ENCODE measurements at regions of chr12 and their contacts with region 1.

Region 1: GRCh38 chr12:50314629-50315312 is 31.5 kb upstream of the LIMA1 start:
- DNase-seq: peak; percentile 46
- ATAC-seq: peak; percentile 60; the same call in 1 of the 2 replicates
- H3K4me3 ChIP-seq: no peak overlapping the region
- H3K27ac ChIP-seq: peak overlapping the region; percentile 78
- H3K4me1 ChIP-seq: peaks cover 20% of the 10 kb centered on the region
- H3K27me3 ChIP-seq: no peaks in the 10 kb centered on the region
- CTCF ChIP-seq: peak; percentile 81

Region 2: DNA sequence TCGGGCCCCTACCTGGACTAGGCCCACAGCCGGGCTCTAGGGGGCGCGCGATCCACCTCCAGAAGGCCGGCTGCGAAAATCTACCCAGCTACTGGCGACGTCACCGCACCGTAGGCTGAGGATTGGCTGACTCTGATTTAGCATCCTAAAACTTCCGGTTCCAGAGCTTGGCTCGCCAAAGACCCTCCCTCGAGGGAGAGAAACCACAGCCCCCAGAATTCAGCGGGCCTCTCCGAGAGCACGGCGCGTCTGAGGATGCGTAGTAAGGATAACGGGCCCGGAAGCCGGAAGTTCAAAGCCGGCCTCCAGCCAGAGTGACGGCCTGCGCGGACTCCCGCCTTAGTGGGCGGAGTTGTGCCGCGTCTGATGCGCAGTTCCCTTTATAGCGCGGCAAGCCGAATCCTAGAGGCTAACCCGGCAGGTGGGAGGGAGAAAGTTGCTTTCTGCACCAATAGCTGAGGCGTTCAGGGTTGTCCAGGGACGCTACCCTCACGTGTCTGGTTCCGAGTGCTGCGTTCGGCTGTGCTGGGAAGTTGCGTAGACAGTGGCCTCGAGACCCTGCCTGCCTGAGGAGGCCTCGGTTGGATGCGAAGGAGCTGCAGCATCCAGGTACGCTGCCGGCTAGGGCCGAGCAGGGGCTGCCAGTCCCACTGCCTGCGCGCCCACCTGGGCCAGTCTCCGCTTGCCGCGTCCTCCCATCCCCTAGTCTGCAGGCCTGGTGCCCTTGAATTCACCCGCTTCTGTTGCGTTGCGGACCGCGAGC is 202.9 kb before region 1 on chr12 and contains the start of gene COX14:
- CTCF ChIA-PET with region 1: interaction called, 15 read pairs
- POLR2A ChIA-PET with region 1: no interaction called
- in situ Hi-C with region 1: no loop called
- intact Hi-C with region 1: no loop called
- DNase-seq: peak; percentile 99
- ATAC-seq: peak; percentile 94
- H3K4me3 ChIP-seq: peak within 1 kb of the TSS; percentile 64 to 99
- H3K27ac ChIP-seq: peak within 1 kb of the TSS; percentile 71
- H3K4me1 ChIP-seq: peaks cover 15% of the 10 kb centered on the region
- H3K27me3 ChIP-seq: no peaks in the 10 kb centered on the region
- CTCF ChIP-seq: peak; percentile 99
- total RNA-seq, gene COX14: 74.5 TPM

Region 3: DNA sequence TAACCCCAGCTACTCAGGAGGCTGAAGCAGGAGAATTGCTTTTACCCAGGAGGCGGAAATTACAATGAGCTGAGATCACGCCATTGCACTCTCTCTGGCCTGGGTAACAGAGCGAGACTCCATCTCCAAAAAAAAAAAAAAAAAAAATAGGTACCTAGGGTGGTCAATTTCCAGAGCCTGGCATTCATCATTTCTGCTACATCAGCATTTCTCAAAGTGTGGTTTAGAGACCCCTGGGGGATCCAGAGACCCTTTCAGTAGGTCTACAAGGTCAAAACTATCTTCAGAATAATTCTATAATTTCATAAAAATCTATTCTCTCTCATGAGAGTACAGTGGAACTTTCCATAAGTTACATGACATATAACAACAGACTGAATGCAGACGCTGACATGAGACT is 167.5 kb before region 1 on chr12:
- CTCF ChIA-PET with region 1: interaction called, 15 read pairs
- POLR2A ChIA-PET with region 1: no interaction called
- in situ Hi-C with region 1: no loop called
- intact Hi-C with region 1: no loop called
- DNase-seq: no peak
- ATAC-seq: no peak
- H3K4me3 ChIP-seq: no peak overlapping the region
- H3K27ac ChIP-seq: no peak overlapping the region
- H3K4me1 ChIP-seq: peaks cover 9% of the 10 kb centered on the region; the same call in 1 of the 2 replicates
- H3K27me3 ChIP-seq: no peaks in the 10 kb centered on the region
- CTCF ChIP-seq: no peak

Region 4: GRCh38 chr12:50162230-50162629 is 152.5 kb before region 1 on chr12:
- CTCF ChIA-PET with region 1: interaction called, 12 read pairs
- POLR2A ChIA-PET with region 1: no interaction called
- in situ Hi-C with region 1: no loop called
- intact Hi-C with region 1: no loop called
- DNase-seq: no peak
- ATAC-seq: no peak
- H3K4me3 ChIP-seq: no peak overlapping the region
- H3K27ac ChIP-seq: no peak overlapping the region
- H3K4me1 ChIP-seq: peaks cover 8% of the 10 kb centered on the region
- H3K27me3 ChIP-seq: no peaks in the 10 kb centered on the region
- CTCF ChIP-seq: no peak

Region 5: GRCh38 chr12:50187084-50187900 is 127.5 kb before region 1 on chr12:
- CTCF ChIA-PET with region 1: interaction called, 6 read pairs
- POLR2A ChIA-PET with region 1: no interaction called
- in situ Hi-C with region 1: no loop called
- intact Hi-C with region 1: loop called (anchors 10 kb)
- DNase-seq: no peak
- ATAC-seq: peak; percentile 26; the same call in 1 of the 2 replicates
- H3K4me3 ChIP-seq: no peak overlapping the region
- H3K27ac ChIP-seq: peak overlapping the region; percentile 73
- H3K4me1 ChIP-seq: peaks cover 29% of the 10 kb centered on the region
- H3K27me3 ChIP-seq: no peaks in the 10 kb centered on the region
- CTCF ChIP-seq: no peak

Region 6: DNA sequence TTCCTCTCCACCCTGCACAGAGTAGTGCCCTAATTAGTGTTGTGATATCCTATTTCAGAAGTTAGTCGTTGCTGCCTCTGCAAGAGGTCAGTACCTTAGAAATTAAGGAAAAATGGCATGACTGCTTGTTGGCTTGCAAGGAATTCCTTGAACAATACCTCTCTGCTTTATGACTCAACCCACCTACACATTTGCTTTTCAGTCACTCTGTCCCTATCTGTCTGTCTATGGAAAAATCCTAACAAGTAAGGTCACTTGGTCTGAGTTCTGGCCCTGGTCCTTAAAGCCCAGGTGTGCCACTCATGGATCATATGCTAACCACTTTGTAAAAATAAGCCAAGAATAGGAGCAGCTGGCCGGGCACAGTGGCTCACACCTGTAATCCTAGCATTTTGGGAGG is 332.7 kb after region 1 on chr12:
- CTCF ChIA-PET with region 1: no interaction called
- POLR2A ChIA-PET with region 1: no interaction called
- in situ Hi-C with region 1: no loop called
- intact Hi-C with region 1: no loop called
- DNase-seq: no peak
- ATAC-seq: peak; percentile 66; the same call in 1 of the 2 replicates
- H3K4me3 ChIP-seq: no peak overlapping the region
- H3K27ac ChIP-seq: no peak overlapping the region
- H3K4me1 ChIP-seq: 0 out of 2 replicates have a peak, but pooled peaks cover 5% of the 10 kb centered on the region
- H3K27me3 ChIP-seq: no peaks in the 10 kb centered on the region
- CTCF ChIP-seq: no peak

Measured in Panc1 (cell line).